ENCODE measurements at regions of chr1 and their contacts with region 1.

Region 1: DNA sequence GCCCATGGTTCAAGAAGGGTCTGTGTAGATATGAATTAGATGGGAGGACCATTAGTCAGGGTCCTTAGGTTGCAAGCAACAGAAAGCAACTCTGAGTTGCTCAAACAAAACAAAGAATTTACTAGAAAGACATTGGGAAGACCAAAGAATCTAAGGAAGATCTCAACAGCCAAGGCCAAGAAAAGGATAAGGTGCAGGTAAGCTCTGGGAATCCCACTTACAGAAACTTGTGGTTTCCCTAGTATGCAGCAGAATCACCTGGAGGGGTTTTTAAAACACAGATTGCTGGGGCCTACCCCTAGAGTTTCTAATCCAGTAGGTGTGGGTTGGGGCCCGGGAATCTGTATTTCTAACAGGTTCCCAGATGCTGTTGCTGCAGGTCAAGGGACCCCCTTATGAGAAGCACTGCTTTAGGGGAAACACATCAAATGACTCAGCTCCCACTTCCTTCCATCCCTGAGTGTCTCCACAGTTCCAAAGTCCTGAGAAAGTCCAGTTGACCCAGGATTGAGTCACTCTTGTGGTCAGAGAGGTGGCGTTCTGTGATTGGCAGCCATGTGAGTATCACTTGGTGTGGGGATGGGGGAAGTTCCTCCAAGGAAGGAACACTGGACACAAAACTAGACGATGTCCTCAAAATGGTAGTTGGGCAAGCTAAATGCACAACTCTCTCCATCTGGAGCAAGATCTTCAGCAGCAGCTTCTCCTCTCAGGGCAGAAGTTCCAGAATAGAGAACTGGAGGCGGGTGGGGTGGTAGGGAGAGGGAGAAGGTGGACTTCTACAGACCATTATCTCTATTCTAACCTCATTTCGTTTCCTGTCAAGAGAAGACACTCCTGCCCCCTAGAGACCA is 24.2 kb upstream of the EYA3 start:
- DNase-seq: no peak
- H3K4me3 ChIP-seq: no peak overlapping the region
- H3K27ac ChIP-seq: no peak overlapping the region; the same call in 1 of the 2 replicates
- H3K4me1 ChIP-seq: no peaks in the 10 kb centered on the region
- H3K27me3 ChIP-seq: no peaks in the 10 kb centered on the region
- CTCF ChIP-seq: no peak
- EP300 ChIP-seq: no peak
- POLR2A ChIP-seq: no peak
- RAD21 ChIP-seq: peak in 1 of 2 experiments; percentile 47; a peak in 2 of 4 replicates

Region 2: DNA sequence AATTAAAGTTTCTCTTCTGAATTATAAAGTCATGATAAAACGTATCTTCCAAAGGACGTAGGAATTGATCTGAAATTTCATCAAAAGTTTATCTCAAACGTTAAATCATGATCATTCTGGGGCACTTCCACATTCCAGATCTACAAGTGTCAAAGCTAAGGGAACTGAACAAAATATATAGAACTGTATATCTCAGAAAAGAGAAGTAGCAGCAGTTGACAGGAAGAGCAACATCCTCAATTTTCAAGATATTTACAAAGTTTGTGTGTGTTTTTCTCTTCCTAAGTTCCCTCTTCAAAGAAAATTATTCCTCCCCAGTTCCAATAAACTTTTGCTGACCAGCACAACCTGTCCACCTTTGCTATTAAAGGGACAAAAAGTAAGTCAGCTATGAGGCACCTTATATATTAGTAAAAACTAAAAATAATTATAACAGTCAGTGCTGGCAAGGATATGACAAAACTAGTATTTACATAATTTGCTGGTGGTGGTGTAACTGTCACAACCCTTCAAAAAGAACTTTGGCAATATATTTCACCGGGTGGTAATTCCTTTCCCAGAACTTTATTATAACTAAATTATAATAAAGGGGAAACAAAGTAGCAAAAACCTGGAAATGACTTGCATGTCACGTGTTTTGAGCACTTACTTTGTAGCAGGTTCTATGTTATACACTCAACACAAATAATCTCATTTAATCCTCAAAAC is 14.3 kb after region 1 on chr1:
- CTCF ChIA-PET with region 1: interaction called, 10 read pairs
- POLR2A ChIA-PET with region 1: no interaction called
- DNase-seq: no peak
- H3K4me3 ChIP-seq: no peak overlapping the region
- H3K27ac ChIP-seq: no peak overlapping the region
- H3K4me1 ChIP-seq: no peaks in the 10 kb centered on the region
- H3K27me3 ChIP-seq: no peaks in the 10 kb centered on the region
- CTCF ChIP-seq: no peak
- EP300 ChIP-seq: no peak
- POLR2A ChIP-seq: no peak
- RAD21 ChIP-seq: no peak

Region 3: GRCh38 chr1:28139025-28139712 is 26.6 kb after region 1 on chr1:
- CTCF ChIA-PET with region 1: no interaction called
- POLR2A ChIA-PET with region 1: no interaction called
- DNase-seq: no peak
- H3K4me3 ChIP-seq: no peak overlapping the region
- H3K27ac ChIP-seq: no peak overlapping the region
- H3K4me1 ChIP-seq: no peaks in the 10 kb centered on the region
- H3K27me3 ChIP-seq: no peaks in the 10 kb centered on the region
- CTCF ChIP-seq: no peak
- EP300 ChIP-seq: no peak
- POLR2A ChIP-seq: no peak
- RAD21 ChIP-seq: no peak

Measured in H1 (cell line).